Pancreas (tissue), 10 donors: ENCODE measurements at regions of chr3 and their contacts with region 1.

Region 1: DNA sequence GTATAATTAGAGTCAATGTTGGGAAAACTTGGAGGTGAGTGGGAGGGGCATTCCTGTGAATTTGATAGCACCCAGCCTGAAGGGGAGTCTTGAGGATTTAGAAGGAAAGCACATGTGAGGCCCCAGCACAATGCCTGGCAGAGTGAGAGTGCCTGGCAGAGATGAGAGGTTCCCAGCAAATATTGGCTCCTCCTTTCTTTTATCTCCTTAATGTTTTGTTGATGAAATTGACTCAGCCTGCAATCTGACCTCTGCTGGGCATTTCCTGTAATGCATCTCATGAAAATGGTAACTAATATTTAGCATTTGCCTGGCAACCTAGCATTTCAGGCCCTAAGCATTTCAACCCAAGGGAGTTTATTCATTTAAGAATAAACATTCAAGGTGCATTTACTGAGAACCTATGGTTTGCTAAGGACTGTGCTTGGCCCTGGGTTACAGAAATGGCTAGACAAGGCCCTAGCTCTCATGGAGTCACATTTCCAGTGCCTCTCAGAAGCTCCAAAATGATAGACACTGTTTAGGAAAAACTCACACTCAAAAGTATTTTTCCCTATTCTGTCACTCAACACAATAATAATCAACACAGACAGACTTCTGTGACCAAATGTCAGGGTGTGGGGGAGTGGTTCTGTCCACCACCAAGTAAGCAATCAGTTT is 19.0 kb downstream of the PDHB start:
- DNase-seq: peak in 2 of 6 donors; percentile 20 to 61
- ATAC-seq: peak; percentile 78 to 91 (median 86)
- H3K4me3 ChIP-seq: no peak overlapping the region
- H3K27ac ChIP-seq: no peak overlapping the region
- H3K4me1 ChIP-seq: no peaks in the 10 kb centered on the region
- H3K27me3 ChIP-seq: no peaks in the 10 kb centered on the region
- CTCF ChIP-seq: peak; percentile 43 to 66 (median 64)

Region 2: GRCh38 chr3:58161435-58162398 is 253.0 kb before region 1 on chr3:
- intact Hi-C with region 1: no loop called
- DNase-seq: peak in 5 of 6 donors; percentile 58 to 86 (median 76)
- ATAC-seq: no peak
- H3K4me3 ChIP-seq: no peak overlapping the region
- H3K27ac ChIP-seq: peak overlapping the region in 2 of 4 donors; percentile 31 to 93
- H3K4me1 ChIP-seq: peaks cover 33 to 47% (median 38%) of the 10 kb centered on the region in 3 donors
- H3K27me3 ChIP-seq: no peaks in the 10 kb centered on the region
- CTCF ChIP-seq: no peak

Region 3: DNA sequence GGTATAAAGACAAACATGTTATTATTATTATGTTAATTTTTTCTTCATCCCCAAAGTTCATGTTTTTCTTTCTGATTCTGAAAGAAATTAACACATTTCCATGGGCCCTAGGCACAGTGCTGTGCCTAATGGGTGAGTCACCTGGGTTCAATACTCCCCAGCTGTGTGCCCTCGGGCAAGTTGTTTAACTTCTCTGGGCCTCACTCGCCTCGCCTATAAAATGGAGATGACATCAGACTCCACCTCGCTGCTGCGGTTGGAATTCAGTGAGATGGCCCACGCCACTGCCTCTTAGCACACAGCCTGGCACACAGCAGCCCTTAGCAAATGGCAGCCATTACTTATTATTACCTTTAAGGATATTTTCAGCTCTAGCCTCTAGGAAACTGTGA is 226.5 kb before region 1 on chr3:
- intact Hi-C with region 1: loop called in 1 of 3 experiments (anchors 10 kb)
- DNase-seq: peak in 1 of 6 donors; percentile 21
- ATAC-seq: no peak
- H3K4me3 ChIP-seq: no peak overlapping the region
- H3K27ac ChIP-seq: no peak overlapping the region
- H3K4me1 ChIP-seq: no peaks in the 10 kb centered on the region
- H3K27me3 ChIP-seq: no peaks in the 10 kb centered on the region
- CTCF ChIP-seq: no peak

Region 4: DNA sequence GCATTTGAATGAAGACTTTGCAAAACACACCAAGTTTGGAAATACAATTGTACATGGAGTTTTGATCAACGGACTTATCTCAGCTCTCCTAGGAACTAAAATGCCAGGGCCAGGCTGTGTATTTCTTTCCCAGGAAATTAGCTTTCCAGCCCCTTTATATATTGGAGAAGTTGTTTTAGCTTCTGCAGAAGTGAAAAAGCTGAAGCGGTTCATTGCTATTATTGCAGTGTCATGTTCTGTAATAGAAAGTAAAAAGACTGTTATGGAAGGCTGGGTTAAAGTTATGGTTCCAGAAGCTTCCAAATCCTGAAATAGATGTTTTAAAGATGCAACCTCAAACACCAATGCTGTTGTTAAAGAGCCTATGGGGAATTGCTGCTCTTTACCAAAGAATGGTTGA is 96.9 kb before region 1 on chr3:
- intact Hi-C with region 1: loop called in 1 of 3 experiments (anchors 5 kb)
- DNase-seq: no peak
- ATAC-seq: no peak
- H3K4me3 ChIP-seq: no peak overlapping the region
- H3K27ac ChIP-seq: no peak overlapping the region
- H3K4me1 ChIP-seq: no peaks in the 10 kb centered on the region
- H3K27me3 ChIP-seq: no peaks in the 10 kb centered on the region
- CTCF ChIP-seq: no peak

Region 5: DNA sequence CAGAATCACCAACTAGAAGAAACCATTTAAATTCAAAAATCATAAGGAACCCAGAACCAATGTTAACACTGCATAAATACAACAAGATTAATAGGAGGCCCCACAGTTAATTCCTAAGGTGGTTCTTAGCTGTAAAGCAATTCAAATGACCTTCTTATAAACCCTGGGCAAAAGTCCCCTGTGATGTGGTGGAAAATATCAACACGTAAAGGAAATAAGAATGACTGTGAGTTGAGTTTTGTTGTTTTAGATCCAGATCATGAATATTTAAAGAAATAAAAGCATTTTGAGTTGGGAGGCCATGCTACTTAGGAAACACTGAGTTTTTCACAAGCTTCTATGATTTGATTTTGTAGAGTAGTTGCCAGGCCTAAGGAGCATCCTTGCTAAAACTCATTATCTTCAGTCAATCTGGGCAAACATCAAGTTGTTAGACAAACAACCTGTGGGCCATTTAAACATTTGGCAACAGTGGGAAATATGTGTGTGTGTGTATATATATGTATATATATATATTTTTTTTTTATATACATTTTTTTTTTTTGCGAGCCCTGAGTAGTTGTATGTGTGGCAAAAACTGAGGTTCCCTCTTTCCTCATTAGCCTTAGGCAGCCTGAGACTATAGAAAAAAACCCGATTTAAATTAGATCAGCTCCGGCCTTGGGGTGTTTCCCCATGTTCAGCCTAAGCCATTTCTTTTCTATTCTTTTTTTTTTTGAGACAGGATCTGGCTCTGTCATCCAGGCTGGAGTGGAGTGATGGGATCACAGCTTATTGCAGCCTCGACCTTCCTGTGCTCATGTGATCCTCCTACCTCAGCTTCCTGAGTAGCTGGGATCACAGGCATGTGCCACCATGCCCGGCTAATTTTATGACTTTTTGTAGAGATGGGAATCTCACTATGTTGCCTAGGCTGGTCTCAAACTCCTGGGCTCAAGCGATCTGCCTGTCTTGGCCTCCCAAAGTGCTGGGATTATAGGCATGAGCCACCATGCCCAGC is 90.0 kb before region 1 on chr3:
- intact Hi-C with region 1: loop called in 2 of 3 experiments (anchors 5 kb)
- DNase-seq: no peak
- ATAC-seq: no peak
- H3K4me3 ChIP-seq: no peak overlapping the region
- H3K27ac ChIP-seq: peak overlapping the region in 2 of 4 donors; percentile 58 to 72
- H3K4me1 ChIP-seq: peaks cover 5 to 10% (median 7%) of the 10 kb centered on the region in 3 donors
- H3K27me3 ChIP-seq: no peaks in the 10 kb centered on the region
- CTCF ChIP-seq: no peak

Region 6: GRCh38 chr3:58342676-58343075 is 72.0 kb before region 1 on chr3:
- intact Hi-C with region 1: no loop called
- DNase-seq: no peak
- ATAC-seq: peak in 1 of 4 donors; percentile 14
- H3K4me3 ChIP-seq: no peak overlapping the region
- H3K27ac ChIP-seq: no peak overlapping the region
- H3K4me1 ChIP-seq: no peaks in the 10 kb centered on the region
- H3K27me3 ChIP-seq: no peaks in the 10 kb centered on the region
- CTCF ChIP-seq: no peak

Region 7: DNA sequence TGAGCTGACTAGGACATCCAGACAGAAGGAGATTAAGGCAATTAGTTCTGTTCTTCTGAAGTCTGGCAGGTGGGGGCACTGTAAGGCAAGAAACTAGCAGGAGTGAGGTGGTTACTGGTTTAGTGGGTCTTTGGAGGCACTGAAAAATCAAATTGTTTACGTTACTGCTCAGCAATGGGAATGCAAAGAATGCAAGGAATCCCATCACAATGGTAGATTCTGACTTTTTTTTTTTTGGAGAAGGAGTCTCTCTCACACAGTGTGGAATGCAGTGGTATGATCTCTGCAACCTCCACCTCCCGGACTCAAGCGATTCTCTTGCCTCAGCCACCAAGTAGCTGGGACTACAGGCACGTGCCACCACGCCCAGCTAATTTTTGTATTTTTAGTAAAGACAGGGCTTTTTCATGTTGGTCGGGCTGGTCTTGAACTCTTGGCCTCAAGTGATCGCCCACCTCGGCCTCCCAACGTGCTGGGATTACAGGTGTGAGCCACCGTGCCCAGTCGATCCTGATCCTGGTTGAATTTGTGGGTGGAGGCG is 146.2 kb after region 1 on chr3:
- intact Hi-C with region 1: no loop called
- DNase-seq: peak in 1 of 6 donors; percentile 17
- ATAC-seq: peak; percentile 47 to 77 (median 62)
- H3K4me3 ChIP-seq: no peak overlapping the region
- H3K27ac ChIP-seq: no peak overlapping the region
- H3K4me1 ChIP-seq: peaks cover 1 to 5% (median 3%) of the 10 kb centered on the region in 3 donors
- H3K27me3 ChIP-seq: no peaks in the 10 kb centered on the region
- CTCF ChIP-seq: no peak

Region 8: DNA sequence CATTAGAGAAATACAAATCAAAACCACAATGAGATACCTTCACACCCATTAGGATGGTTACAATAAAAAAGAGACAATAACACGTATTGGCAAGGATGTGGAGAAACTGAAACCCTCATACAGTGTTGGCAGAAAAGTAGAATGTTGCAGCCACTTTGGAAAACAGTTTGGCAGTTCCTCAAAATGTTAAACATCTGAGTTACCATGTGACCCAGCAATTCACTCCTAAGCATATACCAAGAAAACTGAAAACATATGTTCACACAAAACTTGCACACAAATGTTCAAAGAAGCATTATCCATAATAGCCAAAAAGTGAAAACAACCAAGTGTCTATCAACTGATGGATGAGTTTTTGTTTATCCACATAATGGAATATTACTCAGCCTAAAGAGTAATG is 418.8 kb after region 1 on chr3:
- intact Hi-C with region 1: no loop called
- DNase-seq: no peak
- ATAC-seq: no peak
- H3K4me3 ChIP-seq: no peak overlapping the region
- H3K27ac ChIP-seq: no peak overlapping the region
- H3K4me1 ChIP-seq: no peaks in the 10 kb centered on the region
- H3K27me3 ChIP-seq: no peaks in the 10 kb centered on the region
- CTCF ChIP-seq: no peak